Common myeloid progenitor, CD34-positive (primary cell): ENCODE measurements at regions of chr6 and their contacts with region 1.

Region 1: GRCh38 chr6:6547110-6547879 is 41.2 kb upstream of the LY86 start:
- DNase-seq: peak; percentile 88 to 93 (median 91)
- H3K4me3 ChIP-seq: peak overlapping the region in 6 of 7 experiments; percentile 23 to 76 (median 44)
- H3K27ac ChIP-seq: no peak overlapping the region
- H3K4me1 ChIP-seq: peaks cover 0 to 19% (median 15%) of the 10 kb centered on the region in 4 experiments
- H3K27me3 ChIP-seq: peaks cover 0 to 30% (median 8%) of the 10 kb centered on the region in 5 experiments

Region 2: GRCh38 chr6:6057424-6058053 is 489.8 kb before region 1 on chr6:
- CTCF ChIA-PET with region 1: interaction called, 48 read pairs
- POLR2A ChIA-PET with region 1: no interaction called
- DNase-seq: peak; percentile 64 to 83 (median 79)
- H3K4me3 ChIP-seq: no peak overlapping the region
- H3K27ac ChIP-seq: no peak overlapping the region
- H3K4me1 ChIP-seq: no peaks in the 10 kb centered on the region
- H3K27me3 ChIP-seq: peaks cover 0 to 32% (median 5%) of the 10 kb centered on the region in 5 experiments

Region 3: DNA sequence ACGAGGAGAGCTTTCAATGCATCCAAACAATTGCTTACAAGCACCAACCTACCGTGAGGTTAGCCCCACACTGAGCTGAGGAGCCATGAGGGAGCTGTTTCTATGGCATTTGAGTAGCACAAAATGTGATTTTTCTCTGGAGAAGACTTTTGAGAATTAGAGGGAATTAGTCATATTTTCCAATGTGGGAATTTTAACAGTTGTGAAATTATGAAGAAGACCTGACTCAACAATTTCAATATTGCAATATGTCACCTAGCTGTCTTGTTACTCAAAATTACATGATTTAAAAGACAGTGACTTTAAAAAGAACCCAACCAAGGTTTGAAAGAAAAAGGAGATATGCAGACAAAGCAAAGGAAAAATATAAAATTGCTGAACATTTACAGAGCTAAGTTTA is 21.4 kb before region 1 on chr6:
- CTCF ChIA-PET with region 1: interaction called, 12 read pairs
- POLR2A ChIA-PET with region 1: no interaction called
- DNase-seq: no peak
- H3K4me3 ChIP-seq: no peak overlapping the region
- H3K27ac ChIP-seq: no peak overlapping the region
- H3K4me1 ChIP-seq: no peaks in the 10 kb centered on the region
- H3K27me3 ChIP-seq: peaks cover 2 to 16% (median 4%) of the 10 kb centered on the region in 5 experiments

Region 4: GRCh38 chr6:6533176-6533575 is 14.1 kb before region 1 on chr6:
- CTCF ChIA-PET with region 1: interaction called, 12 read pairs
- POLR2A ChIA-PET with region 1: no interaction called
- DNase-seq: no peak
- H3K4me3 ChIP-seq: no peak overlapping the region
- H3K27ac ChIP-seq: no peak overlapping the region
- H3K4me1 ChIP-seq: peaks cover 0 to under 1% (median 0%) of the 10 kb centered on the region in 4 experiments
- H3K27me3 ChIP-seq: peaks cover 0 to 9% (median 3%) of the 10 kb centered on the region in 5 experiments